Activated CD4-positive, alpha-beta memory T cell treated with anti-CD3 and anti-CD28 coated beads for 36 hours (primary cell): ENCODE measurements at regions of chr5 and their contacts with region 1.

Region 1: GRCh38 chr5:62569470-62569869 is 9.1 kb upstream of the LRRC70 start:
- DNase-seq: no peak
- H3K4me3 Mint-ChIP-seq: no peak overlapping the region
- H3K27ac Mint-ChIP-seq: no peak overlapping the region
- H3K4me1 Mint-ChIP-seq: peaks cover 19% of the 10 kb centered on the region
- H3K27me3 Mint-ChIP-seq: no peaks in the 10 kb centered on the region

Region 2: DNA sequence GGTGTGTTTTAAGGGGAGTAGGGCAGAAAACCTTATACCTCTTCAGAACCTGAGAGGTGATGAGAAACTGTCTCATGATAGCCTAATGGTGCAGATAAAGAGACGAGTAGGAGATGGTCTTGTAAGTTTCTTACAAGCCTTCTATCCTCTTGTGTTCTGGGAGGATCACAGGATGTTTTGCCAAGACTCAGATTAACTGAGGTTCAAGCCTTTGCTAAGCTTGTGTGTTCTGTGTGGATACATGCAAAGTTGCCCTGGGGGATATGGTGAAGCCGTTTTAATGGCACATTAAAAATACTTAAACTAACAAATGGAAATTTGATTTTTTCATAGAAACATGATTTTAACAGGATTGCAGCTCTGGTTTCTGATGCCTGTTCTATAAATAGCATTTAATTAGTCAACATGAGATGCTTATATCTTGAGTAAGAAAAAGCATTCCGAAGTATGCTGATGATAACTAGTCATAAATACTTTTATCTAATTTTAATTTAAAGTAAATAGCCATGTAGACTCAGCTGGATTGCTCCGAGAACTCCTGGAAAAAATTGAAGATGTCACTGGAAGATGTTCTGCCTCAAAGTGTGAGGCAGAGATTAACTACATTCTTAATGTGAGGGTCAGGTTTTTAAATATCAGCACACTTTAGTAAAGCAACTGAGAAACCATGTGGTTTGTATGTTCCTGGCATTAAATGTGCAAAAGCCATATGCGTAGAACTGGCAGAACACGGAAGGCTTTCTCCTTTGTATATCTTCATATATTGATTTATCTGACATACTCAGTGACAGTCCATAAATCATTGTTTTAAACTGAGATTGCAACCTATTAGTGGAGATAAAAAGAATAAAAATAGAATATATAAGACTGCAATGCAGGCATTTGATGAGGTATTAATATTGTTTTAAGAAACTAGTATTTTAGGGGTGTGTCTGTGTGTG is 103.2 kb before region 1 on chr5:
- CTCF ChIA-PET with region 1: no interaction called
- POLR2A ChIA-PET with region 1: no interaction called
- intact Hi-C with region 1: no loop called
- DNase-seq: no peak
- H3K4me3 Mint-ChIP-seq: no peak overlapping the region
- H3K27ac Mint-ChIP-seq: no peak overlapping the region
- H3K4me1 Mint-ChIP-seq: no peaks in the 10 kb centered on the region
- H3K27me3 Mint-ChIP-seq: no peaks in the 10 kb centered on the region

Region 3: GRCh38 chr5:62538017-62538942 is 31.2 kb before region 1 on chr5:
- CTCF ChIA-PET with region 1: no interaction called
- POLR2A ChIA-PET with region 1: no interaction called
- intact Hi-C with region 1: loop called (anchors 1 kb)
- DNase-seq: peak; percentile 27
- H3K4me3 Mint-ChIP-seq: no peak overlapping the region
- H3K27ac Mint-ChIP-seq: peak overlapping the region; percentile 80
- H3K4me1 Mint-ChIP-seq: peaks cover 17% of the 10 kb centered on the region
- H3K27me3 Mint-ChIP-seq: no peaks in the 10 kb centered on the region

Region 4: DNA sequence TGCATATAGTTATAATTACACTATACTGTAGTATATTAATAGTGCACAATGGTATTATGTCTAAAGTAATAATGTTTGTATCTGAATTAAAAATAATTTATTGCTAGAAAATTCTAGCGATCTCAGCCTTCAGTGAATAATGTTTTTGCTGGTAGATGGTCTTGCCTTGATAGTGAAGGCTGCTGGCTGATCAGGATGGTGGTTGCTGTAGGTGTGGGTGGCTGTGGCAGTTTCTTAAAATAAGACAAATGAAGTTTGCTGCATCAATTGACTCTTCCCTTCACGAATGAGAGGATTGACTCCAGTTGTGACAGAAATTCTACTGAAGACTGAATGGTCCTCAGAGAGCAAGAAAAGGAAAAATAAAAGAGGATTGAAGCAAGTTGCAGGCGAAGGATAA is 10.5 kb before region 1 on chr5:
- CTCF ChIA-PET with region 1: no interaction called
- POLR2A ChIA-PET with region 1: no interaction called
- intact Hi-C with region 1: no loop called
- DNase-seq: no peak
- H3K4me3 Mint-ChIP-seq: no peak overlapping the region
- H3K27ac Mint-ChIP-seq: no peak overlapping the region
- H3K4me1 Mint-ChIP-seq: no peaks in the 10 kb centered on the region
- H3K27me3 Mint-ChIP-seq: no peaks in the 10 kb centered on the region